ENCODE measurements at regions of chr14 and their contacts with region 1.

Region 1: GRCh38 chr14:35404449-35405303 is at the start of gene NFKBIA:
- DNase-seq: peak; percentile 92
- H3K4me3 Mint-ChIP-seq: peak within 1 kb of the TSS; percentile 89
- H3K27ac Mint-ChIP-seq: peak within 1 kb of the TSS; percentile 95
- H3K4me1 Mint-ChIP-seq: peaks cover 55% of the 10 kb centered on the region
- H3K27me3 Mint-ChIP-seq: peaks cover 4% of the 10 kb centered on the region

Region 2: GRCh38 chr14:35215110-35215876 is 189.4 kb before region 1 on chr14:
- CTCF ChIA-PET with region 1: interaction called, 20 read pairs
- DNase-seq: no peak
- H3K4me3 Mint-ChIP-seq: no peak overlapping the region
- H3K27ac Mint-ChIP-seq: no peak overlapping the region
- H3K4me1 Mint-ChIP-seq: peaks cover 24% of the 10 kb centered on the region
- H3K27me3 Mint-ChIP-seq: no peaks in the 10 kb centered on the region

Region 3: GRCh38 chr14:35229495-35230089 is 175.1 kb before region 1 on chr14:
- CTCF ChIA-PET with region 1: interaction called, 65 read pairs
- DNase-seq: no peak
- H3K4me3 Mint-ChIP-seq: no peak overlapping the region
- H3K27ac Mint-ChIP-seq: no peak overlapping the region
- H3K4me1 Mint-ChIP-seq: peaks cover 20% of the 10 kb centered on the region
- H3K27me3 Mint-ChIP-seq: no peaks in the 10 kb centered on the region

Region 4: DNA sequence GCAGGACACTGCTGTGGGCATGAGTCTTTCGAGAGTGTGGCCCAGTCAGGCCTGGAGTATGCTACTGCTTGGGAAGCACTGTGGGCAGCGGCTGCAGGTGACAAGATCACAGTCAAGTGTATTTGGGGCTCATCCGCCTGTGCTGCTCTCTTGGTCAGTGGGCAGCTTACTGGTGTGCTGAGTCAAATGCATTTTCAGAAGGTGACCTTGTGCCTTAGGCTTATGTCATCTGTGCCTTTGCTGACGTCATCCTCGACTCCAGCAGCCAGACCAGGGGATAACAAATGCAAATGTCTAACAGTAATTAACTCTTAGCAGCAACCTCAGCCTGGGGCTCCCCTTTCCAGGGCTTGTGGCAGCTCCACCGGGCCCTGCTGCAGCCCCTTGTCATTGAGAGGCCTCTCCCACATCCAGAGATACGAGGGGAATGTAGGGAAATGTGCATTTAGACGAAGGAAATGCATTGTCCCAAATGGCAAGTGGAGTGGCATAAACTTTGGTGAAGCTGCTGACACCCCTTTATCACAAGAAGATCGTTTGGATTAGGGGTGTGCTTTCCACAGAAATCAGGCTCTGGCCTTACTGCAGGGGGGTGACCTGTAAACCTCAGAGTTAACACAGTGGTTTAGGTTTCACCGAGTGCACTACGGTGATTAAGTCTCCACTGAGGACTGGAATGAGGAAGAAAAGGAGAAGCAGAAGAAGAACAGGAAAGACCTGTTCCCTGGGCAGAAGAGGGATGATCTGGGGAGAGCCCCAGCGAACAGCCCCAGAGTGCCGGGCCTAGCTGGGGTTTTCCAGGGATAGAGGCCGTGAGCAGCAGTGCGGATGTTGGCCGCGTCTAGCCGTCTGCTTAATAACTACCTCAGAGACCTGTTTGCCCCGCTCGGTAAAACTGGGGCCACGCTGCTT is 72.8 kb before region 1 on chr14:
- CTCF ChIA-PET with region 1: interaction called, 13 read pairs
- DNase-seq: no peak
- H3K4me3 Mint-ChIP-seq: no peak overlapping the region
- H3K27ac Mint-ChIP-seq: peak overlapping the region; percentile 67
- H3K4me1 Mint-ChIP-seq: peaks cover 29% of the 10 kb centered on the region
- H3K27me3 Mint-ChIP-seq: no peaks in the 10 kb centered on the region

Region 5: GRCh38 chr14:35480128-35480769 is 75.6 kb after region 1 on chr14:
- CTCF ChIA-PET with region 1: no interaction called
- DNase-seq: no peak
- H3K4me3 Mint-ChIP-seq: no peak overlapping the region
- H3K27ac Mint-ChIP-seq: no peak overlapping the region
- H3K4me1 Mint-ChIP-seq: no peaks in the 10 kb centered on the region
- H3K27me3 Mint-ChIP-seq: no peaks in the 10 kb centered on the region